PC-9 (cell line): ENCODE measurements at regions of chr1 and their contacts with region 1.

Region 1: GRCh38 chr1:14835725-14836124 is 237.2 kb downstream of the KAZN start:
- DNase-seq: no peak
- H3K4me3 ChIP-seq: no peak overlapping the region
- H3K27ac ChIP-seq: no peak overlapping the region
- H3K4me1 ChIP-seq: no peaks in the 10 kb centered on the region
- H3K27me3 ChIP-seq: no peaks in the 10 kb centered on the region
- CTCF ChIP-seq: no peak

Region 2: DNA sequence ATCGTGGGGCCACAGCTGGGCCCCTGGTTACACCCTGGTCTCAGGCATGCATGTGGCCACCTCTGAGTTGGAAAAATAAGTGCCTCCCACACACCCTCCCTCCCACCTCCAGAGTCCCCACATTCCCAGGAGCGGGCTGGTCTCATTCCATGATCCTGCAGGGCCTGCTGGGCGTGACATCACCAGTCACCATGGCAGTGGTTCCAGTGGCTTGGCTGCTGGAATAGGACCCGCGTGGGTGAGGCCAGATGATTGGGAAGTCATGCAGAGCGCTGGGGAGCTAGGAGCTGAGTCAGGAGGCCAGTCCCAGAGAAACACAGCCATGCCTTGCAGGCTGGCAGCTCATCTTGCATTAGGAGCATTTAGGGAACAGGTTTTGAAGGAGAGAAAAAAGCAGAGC is 192.4 kb after region 1 on chr1:
- CTCF ChIA-PET with region 1: no interaction called
- POLR2A ChIA-PET with region 1: no interaction called
- intact Hi-C with region 1: loop called (anchors 2 kb)
- DNase-seq: peak; percentile 42 to 71
- H3K4me3 ChIP-seq: no peak overlapping the region
- H3K27ac ChIP-seq: no peak overlapping the region
- H3K4me1 ChIP-seq: no peaks in the 10 kb centered on the region
- H3K27me3 ChIP-seq: no peaks in the 10 kb centered on the region
- CTCF ChIP-seq: no peak

Region 3: GRCh38 chr1:15038232-15039016 is 202.7 kb after region 1 on chr1:
- CTCF ChIA-PET with region 1: no interaction called
- POLR2A ChIA-PET with region 1: no interaction called
- intact Hi-C with region 1: no loop called
- DNase-seq: peak; percentile 31 to 39
- H3K4me3 ChIP-seq: no peak overlapping the region
- H3K27ac ChIP-seq: no peak overlapping the region
- H3K4me1 ChIP-seq: no peaks in the 10 kb centered on the region
- H3K27me3 ChIP-seq: no peaks in the 10 kb centered on the region
- CTCF ChIP-seq: peak; percentile 55

Region 4: GRCh38 chr1:15100121-15100874 is 264.6 kb after region 1 on chr1:
- CTCF ChIA-PET with region 1: no interaction called
- POLR2A ChIA-PET with region 1: no interaction called
- intact Hi-C with region 1: loop called (anchors 2 kb)
- DNase-seq: peak; percentile 39 to 68
- H3K4me3 ChIP-seq: no peak overlapping the region
- H3K27ac ChIP-seq: no peak overlapping the region
- H3K4me1 ChIP-seq: no peaks in the 10 kb centered on the region
- H3K27me3 ChIP-seq: no peaks in the 10 kb centered on the region
- CTCF ChIP-seq: peak; percentile 88